ENCODE measurements at regions of chr1 and their contacts with region 1.

Region 1: GRCh38 chr1:160098852-160099561 is 588 bp upstream of the IGSF8 start:
- DNase-seq: peak; percentile 93
- H3K4me3 Mint-ChIP-seq: peak overlapping the region; percentile 73
- H3K27ac Mint-ChIP-seq: peak overlapping the region; percentile 73
- H3K4me1 Mint-ChIP-seq: peaks cover 41% of the 10 kb centered on the region
- H3K27me3 Mint-ChIP-seq: peaks cover 5% of the 10 kb centered on the region

Region 2: GRCh38 chr1:160031365-160032164 is 67.4 kb before region 1 on chr1 and contains the start of gene PIGM:
- intact Hi-C with region 1: loop called (anchors 1 kb)
- DNase-seq: peak; percentile 91
- H3K4me3 Mint-ChIP-seq: peak within 1 kb of the TSS; percentile 97
- H3K27ac Mint-ChIP-seq: peak within 1 kb of the TSS; percentile 87
- H3K4me1 Mint-ChIP-seq: peaks cover 36% of the 10 kb centered on the region
- H3K27me3 Mint-ChIP-seq: peaks cover 16% of the 10 kb centered on the region
- total RNA-seq, gene PIGM: 5.4 and 5.5 TPM in 2 replicates

Region 3: DNA sequence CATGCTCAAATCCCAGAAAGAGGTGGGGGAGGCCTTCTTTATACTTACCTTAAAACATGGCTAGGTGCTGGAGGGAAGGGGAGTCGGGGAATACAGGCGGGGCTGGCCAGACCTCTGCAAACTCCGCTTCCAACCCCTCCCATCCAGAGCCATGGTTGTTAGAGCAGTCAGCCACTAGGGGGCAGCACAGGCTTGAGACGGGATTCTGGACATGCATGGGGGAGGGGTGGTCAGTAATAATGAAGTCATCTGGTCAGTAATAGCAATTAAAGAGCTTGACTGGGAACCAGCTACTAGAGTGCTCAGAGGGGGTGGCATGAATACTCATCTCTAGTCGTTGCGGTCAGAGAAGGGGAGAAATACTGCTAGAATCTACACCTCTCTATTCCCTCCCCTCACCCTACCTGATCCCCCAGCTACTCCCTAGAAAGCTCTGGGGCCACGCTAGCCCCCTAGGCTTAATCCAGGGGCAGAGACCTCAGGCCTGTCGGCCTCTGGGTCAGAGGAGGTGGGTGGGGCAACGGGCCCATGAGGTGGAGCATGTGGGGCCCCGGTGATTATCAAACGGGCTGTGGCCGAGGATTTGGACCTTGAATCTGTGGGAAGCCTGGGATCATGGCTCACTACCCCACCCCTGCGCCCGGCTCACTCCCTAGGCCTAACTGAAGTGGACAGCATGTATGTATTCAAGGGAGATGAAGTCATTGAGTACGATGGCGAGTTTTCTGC is 94.2 kb after region 1 on chr1:
- intact Hi-C with region 1: loop called (anchors 1 kb)
- DNase-seq: peak; percentile 63
- H3K4me3 Mint-ChIP-seq: no peak overlapping the region
- H3K27ac Mint-ChIP-seq: no peak overlapping the region
- H3K4me1 Mint-ChIP-seq: no peaks in the 10 kb centered on the region
- H3K27me3 Mint-ChIP-seq: no peaks in the 10 kb centered on the region

Region 4: GRCh38 chr1:160261893-160262794 is 163.1 kb after region 1 on chr1 and contains the start of gene DCAF8:
- intact Hi-C with region 1: loop called (anchors 1 kb)
- DNase-seq: peak; percentile 98
- H3K4me3 Mint-ChIP-seq: peak within 1 kb of the TSS; percentile 95
- H3K27ac Mint-ChIP-seq: peak within 1 kb of the TSS; percentile 99
- H3K4me1 Mint-ChIP-seq: peaks cover 51% of the 10 kb centered on the region
- H3K27me3 Mint-ChIP-seq: no peaks in the 10 kb centered on the region
- total RNA-seq, gene DCAF8: 112 and 117 TPM in 2 replicates

Region 5: DNA sequence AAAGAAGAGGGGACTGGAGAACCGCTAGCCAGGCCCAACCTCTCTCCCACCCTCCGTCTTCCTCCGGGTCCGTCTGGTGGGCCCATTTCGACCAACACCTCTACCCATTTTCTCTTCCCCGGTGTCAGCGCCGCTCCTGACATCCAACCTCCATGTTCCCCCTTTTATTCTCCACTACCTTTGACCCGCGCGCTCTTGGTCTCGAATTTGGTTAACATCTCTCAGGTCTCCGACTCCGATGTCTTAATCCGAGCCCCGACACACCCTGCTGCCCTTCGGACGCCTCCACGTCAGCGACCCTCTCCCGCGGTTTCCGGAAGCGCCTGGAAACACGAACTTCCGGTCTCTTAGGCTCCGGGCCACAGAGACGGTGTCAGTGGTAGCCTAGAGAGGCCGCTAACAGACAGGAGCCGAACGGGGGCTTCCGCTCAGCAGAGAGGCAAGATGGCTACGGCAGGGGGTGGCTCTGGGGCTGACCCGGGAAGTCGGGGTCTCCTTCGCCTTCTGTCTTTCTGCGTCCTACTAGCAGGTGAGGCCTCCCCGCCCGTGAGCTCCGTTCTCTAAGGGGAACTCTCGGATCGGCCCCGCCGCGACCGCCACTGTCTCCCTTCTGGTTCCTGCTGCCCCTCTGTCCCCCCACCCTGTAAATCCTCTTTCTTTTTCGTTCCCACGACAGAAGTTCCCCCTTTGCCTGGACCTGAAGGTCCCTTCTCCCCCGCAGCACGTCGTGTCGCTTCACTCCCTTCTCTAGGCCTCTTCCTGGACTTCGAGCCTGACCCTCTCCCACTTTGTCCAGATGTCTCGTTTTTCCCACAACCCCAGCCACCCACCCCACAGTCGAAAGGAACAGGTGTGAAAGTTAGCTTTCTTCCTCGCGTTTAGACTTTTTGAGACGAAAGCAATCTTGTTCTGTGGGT is 244.2 kb after region 1 on chr1 and contains the starts of genes COPA and NCSTN:
- intact Hi-C with region 1: loop called (anchors 1 kb)
- DNase-seq: peak; percentile 88
- H3K4me3 Mint-ChIP-seq: peak within 1 kb of the TSS; percentile 100
- H3K27ac Mint-ChIP-seq: peak within 1 kb of the TSS; percentile 99
- H3K4me1 Mint-ChIP-seq: peaks cover 61% of the 10 kb centered on the region
- H3K27me3 Mint-ChIP-seq: no peaks in the 10 kb centered on the region
- total RNA-seq, gene COPA: 123 and 126 TPM in 2 replicates
- total RNA-seq, gene NCSTN: 74.8 and 81.6 TPM in 2 replicates

Measured in activated T-helper 1 cell treated with anti-CD3 and anti-CD28 coated beads, Interleukin-12 subunit alpha, Interleukin-12 subunit beta, Interleukin-2, Interleukin-4 antibody, amounts not matched to agents 30 ng/mL and 10 ng/mL and 1 ng/mL, durations not matched to agents 14 hours and 24 hours and 36 hours (primary cell).